ENCODE measurements at regions of chr15 and their contacts with region 1.

Region 1: DNA sequence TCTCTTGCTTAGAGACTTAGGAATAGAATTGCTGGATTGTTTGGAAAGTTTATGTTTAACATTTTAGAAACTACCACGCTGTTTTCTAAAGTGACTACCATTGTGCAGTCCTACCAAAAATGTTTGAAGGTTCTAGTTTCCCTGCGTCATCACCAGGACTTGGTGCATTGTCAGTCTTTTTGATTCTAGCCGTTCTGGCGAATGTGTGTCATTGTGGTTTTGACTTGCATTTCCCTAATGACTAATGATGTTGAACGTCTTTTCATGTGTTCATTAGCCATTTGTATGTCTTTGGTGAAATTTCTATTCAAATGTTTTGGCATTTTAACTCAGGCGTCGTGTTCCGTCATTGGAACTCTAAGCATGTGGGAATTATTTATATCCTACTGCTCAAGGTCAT is 58.0 kb downstream of the CHD2 start:
- DNase-seq: no peak
- H3K4me3 ChIP-seq: no peak overlapping the region
- H3K27ac ChIP-seq: no peak overlapping the region
- H3K4me1 ChIP-seq: no peaks in the 10 kb centered on the region
- H3K27me3 ChIP-seq: no peaks in the 10 kb centered on the region
- CTCF ChIP-seq: no peak
- POLR2A ChIP-seq: no peak

Region 2: GRCh38 chr15:92391640-92392039 is 566.5 kb before region 1 on chr15:
- CTCF ChIA-PET with region 1: no interaction called
- POLR2A ChIA-PET with region 1: no interaction called
- dilution Hi-C with region 1: no loop called
- intact Hi-C with region 1: no loop called
- DNase-seq: peak; percentile 19
- H3K4me3 ChIP-seq: no peak overlapping the region
- H3K27ac ChIP-seq: no peak overlapping the region
- H3K4me1 ChIP-seq: peaks cover 2% of the 10 kb centered on the region
- H3K27me3 ChIP-seq: peaks cover 30 to 43% of the 10 kb centered on the region in 2 experiments
- CTCF ChIP-seq: peak; percentile 16 to 38
- POLR2A ChIP-seq: no peak

Region 3: GRCh38 chr15:92831655-92832328 is 126.3 kb before region 1 on chr15:
- CTCF ChIA-PET with region 1: no interaction called
- POLR2A ChIA-PET with region 1: no interaction called
- dilution Hi-C with region 1: no loop called
- intact Hi-C with region 1: no loop called
- DNase-seq: peak; percentile 96
- H3K4me3 ChIP-seq: peak overlapping the region in 1 of 3 experiments; percentile 22
- H3K27ac ChIP-seq: peak overlapping the region; percentile 54
- H3K4me1 ChIP-seq: peaks cover 18% of the 10 kb centered on the region
- H3K27me3 ChIP-seq: no peaks in the 10 kb centered on the region
- CTCF ChIP-seq: no peak
- POLR2A ChIP-seq: no peak

Region 4: DNA sequence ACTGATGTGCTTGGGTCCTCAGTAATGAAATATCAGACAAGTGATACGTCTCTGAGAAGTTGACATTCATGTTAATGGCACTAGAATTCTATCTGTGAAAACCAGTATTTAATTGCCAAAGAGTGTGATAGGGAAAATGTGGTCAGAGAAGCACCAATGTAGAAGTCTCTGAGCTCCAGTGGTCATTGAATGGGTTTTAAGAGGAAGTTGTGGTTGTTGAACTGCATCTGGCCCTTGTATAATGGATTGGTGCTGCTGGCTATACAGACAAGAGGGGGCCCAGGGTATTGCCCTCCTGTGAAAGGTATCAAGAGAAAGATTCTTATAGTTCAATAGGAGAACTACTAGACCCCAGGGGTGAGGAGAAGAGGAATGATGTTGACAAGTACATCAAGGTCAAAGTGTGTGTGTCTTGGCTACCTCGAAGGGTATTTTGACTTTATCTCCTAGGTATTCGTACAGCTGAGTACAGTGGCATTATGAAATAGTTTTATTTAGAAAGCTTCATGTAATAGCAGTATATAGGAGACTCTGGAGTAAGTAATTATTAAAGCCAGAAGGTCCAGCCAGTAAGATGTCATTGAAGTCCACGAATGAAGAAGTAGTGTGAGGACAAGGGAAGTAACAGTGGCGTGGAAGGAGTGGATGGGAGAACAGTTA is 10.9 kb before region 1 on chr15:
- CTCF ChIA-PET with region 1: no interaction called
- POLR2A ChIA-PET with region 1: no interaction called
- dilution Hi-C with region 1: no loop called
- intact Hi-C with region 1: no loop called
- DNase-seq: no peak
- H3K4me3 ChIP-seq: no peak overlapping the region
- H3K27ac ChIP-seq: no peak overlapping the region
- H3K4me1 ChIP-seq: peaks cover 2% of the 10 kb centered on the region
- H3K27me3 ChIP-seq: no peaks in the 10 kb centered on the region
- CTCF ChIP-seq: no peak
- POLR2A ChIP-seq: no peak

Region 5: GRCh38 chr15:92997821-92998220 is 39.7 kb after region 1 on chr15:
- CTCF ChIA-PET with region 1: no interaction called
- POLR2A ChIA-PET with region 1: no interaction called
- dilution Hi-C with region 1: no loop called
- intact Hi-C with region 1: loop called (anchors 5 kb)
- DNase-seq: no peak
- H3K4me3 ChIP-seq: no peak overlapping the region
- H3K27ac ChIP-seq: no peak overlapping the region
- H3K4me1 ChIP-seq: no peaks in the 10 kb centered on the region
- H3K27me3 ChIP-seq: no peaks in the 10 kb centered on the region
- CTCF ChIP-seq: no peak
- POLR2A ChIP-seq: no peak

Region 6: GRCh38 chr15:93331545-93332167 is 373.6 kb after region 1 on chr15:
- CTCF ChIA-PET with region 1: no interaction called
- POLR2A ChIA-PET with region 1: no interaction called
- dilution Hi-C with region 1: no loop called
- intact Hi-C with region 1: no loop called
- DNase-seq: no peak
- H3K4me3 ChIP-seq: no peak overlapping the region
- H3K27ac ChIP-seq: no peak overlapping the region
- H3K4me1 ChIP-seq: no peaks in the 10 kb centered on the region
- H3K27me3 ChIP-seq: no peaks in the 10 kb centered on the region
- CTCF ChIP-seq: no peak
- POLR2A ChIP-seq: no peak